ENCODE measurements at regions of chr17 and their contacts with region 1.

Region 1: GRCh38 chr17:9924735-9925191 is 19.7 kb upstream of the RCVRN start:
- DNase-seq: peak; percentile 39 to 56
- H3K4me3 ChIP-seq: no peak overlapping the region
- H3K27ac ChIP-seq: no peak overlapping the region
- H3K4me1 ChIP-seq: 0 out of 2 replicates have a peak, but pooled peaks cover 3% of the 10 kb centered on the region
- H3K27me3 ChIP-seq: peaks cover 2% of the 10 kb centered on the region; the same call in 1 of the 2 replicates
- CTCF ChIP-seq: peak; percentile 86

Region 2: DNA sequence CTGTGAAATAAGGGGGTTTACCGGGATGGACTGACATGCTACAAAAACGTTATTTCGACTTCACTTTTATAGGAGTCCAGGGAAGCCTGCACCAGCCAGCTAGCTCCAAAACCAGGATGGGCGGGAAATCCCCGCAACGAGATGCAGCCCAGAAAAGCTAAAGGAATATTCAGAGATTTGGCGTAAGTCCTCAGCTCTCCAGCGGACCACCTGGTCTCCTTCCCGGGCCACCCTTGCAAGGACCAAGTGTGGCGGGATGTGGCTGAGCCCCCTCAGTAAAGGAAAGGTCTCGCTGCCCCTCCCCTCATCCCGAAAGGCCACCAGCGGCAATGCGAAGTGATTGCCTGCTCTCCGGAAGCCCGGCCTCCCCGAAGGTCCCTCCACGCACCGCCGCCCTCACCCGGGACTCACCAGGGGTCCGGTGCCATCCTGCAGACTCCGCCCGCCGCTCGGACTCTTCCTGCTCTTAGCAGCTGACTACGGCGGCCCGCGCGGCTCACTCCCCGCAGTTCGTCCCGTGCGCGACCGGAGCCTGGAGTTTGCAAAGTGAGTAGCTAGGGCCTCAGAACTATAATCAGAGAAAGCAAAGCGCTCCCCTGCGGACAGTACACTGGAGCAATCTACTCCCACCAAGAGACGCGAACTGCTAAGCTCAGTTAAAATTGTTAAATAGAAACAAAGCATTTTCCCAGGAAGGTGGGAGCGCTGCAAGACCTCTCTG is 349.2 kb before region 1 on chr17 and contains the start of gene STX8:
- CTCF ChIA-PET with region 1: interaction called, 3 read pairs
- POLR2A ChIA-PET with region 1: no interaction called
- intact Hi-C with region 1: loop called (anchors 1 kb)
- DNase-seq: peak; percentile 57 to 88
- H3K4me3 ChIP-seq: peak within 1 kb of the TSS; percentile 82
- H3K27ac ChIP-seq: no peak within 1 kb of the TSS
- H3K4me1 ChIP-seq: no peaks in the 10 kb centered on the region
- H3K27me3 ChIP-seq: no peaks in the 10 kb centered on the region
- CTCF ChIP-seq: no peak
- total RNA-seq, gene STX8: 49.2 and 60.6 TPM in 2 replicates

Region 3: DNA sequence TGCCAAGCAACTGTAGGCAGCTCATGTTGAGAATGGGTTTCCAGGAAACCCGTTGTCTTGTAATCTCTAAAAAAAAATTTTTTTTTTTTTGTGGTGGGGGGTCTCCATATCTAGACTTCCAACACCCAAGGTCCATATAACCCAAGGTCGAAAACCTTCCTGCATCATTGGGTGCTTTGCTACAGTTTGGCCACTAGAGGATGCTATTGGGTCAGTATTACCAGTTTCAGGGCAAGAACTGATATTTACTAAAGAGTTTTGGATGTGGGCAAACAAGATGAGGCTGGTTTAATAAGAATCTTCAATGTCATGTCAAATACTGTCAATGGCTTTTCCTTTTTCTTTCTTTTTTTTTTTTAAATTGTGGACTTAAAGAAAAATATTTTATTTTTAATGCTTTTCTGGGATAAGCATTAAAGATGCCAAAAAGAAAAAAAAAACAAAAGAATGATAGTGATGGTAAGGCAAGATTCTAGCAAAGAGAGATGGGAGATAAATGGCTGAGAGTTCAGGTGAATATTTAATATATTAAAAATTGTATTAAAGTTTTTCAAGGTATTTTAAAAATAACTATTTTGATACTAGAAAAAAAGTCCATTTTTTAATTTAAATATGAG is 195.6 kb before region 1 on chr17:
- CTCF ChIA-PET with region 1: interaction called, 4 read pairs
- POLR2A ChIA-PET with region 1: no interaction called
- intact Hi-C with region 1: loop called (anchors 1 kb)
- DNase-seq: peak; percentile 29 to 47
- H3K4me3 ChIP-seq: no peak overlapping the region
- H3K27ac ChIP-seq: no peak overlapping the region
- H3K4me1 ChIP-seq: peaks cover 6% of the 10 kb centered on the region
- H3K27me3 ChIP-seq: no peaks in the 10 kb centered on the region
- CTCF ChIP-seq: peak; percentile 95

Region 4: GRCh38 chr17:9802305-9803096 is 122.3 kb before region 1 on chr17:
- CTCF ChIA-PET with region 1: no interaction called
- POLR2A ChIA-PET with region 1: interaction called, 3 read pairs
- intact Hi-C with region 1: loop called (anchors 1 kb)
- DNase-seq: peak; percentile 92 to 96
- H3K4me3 ChIP-seq: peak overlapping the region; percentile 46; the same call in 1 of the 2 replicates
- H3K27ac ChIP-seq: peak overlapping the region; percentile 97
- H3K4me1 ChIP-seq: peaks cover 24% of the 10 kb centered on the region
- H3K27me3 ChIP-seq: no peaks in the 10 kb centered on the region
- CTCF ChIP-seq: no peak

Region 5: DNA sequence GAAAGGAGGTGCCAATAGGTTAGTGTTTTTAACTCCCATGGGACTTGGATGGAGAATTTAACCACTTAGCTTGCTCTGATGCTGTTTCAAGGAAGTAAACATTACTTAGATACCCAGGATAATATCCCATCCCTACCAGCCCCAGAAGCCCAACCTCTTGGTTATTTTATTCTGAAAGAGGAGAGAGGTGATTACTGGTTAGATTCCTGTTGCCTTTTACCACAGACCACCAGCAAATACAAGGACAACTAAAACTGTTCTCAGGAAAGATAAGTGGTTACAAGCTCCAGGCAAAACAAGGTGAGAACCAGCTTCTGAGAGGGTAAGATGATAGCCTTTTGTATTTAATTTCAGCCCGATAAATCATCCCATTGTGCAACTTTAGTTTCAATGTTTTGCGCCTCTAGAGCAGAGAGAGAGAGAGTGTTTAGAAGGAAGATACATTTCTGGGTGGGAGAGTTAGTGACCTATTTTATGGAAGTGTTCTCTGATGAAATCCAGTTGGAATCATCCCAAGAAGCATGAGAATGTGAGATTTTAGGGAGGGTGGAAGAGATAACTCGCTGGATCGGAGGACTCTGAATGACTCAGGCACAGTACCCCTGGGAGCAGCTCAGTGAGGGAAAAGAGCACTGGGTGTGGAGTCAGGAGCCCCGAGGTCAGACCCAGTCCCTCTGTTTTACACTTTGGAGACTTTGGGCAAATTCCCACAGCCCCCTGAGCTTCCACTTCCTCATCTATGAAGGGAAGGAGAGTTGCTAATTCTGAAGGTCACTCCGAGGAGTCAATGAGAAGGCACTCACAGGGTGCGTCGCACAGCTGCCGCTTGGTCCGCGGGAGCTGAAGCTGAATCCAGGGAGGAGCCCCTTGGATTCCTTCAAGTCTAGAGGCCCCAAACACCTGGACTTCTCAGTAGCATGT is 87.0 kb before region 1 on chr17:
- CTCF ChIA-PET with region 1: interaction called, 3 read pairs
- POLR2A ChIA-PET with region 1: no interaction called
- intact Hi-C with region 1: loop called (anchors 1 kb)
- DNase-seq: peak; percentile 41 to 88
- H3K4me3 ChIP-seq: peak overlapping the region; percentile 37; the same call in 1 of the 2 replicates
- H3K27ac ChIP-seq: peak overlapping the region; percentile 99
- H3K4me1 ChIP-seq: peaks cover 51% of the 10 kb centered on the region
- H3K27me3 ChIP-seq: no peaks in the 10 kb centered on the region
- CTCF ChIP-seq: no peak

Region 6: DNA sequence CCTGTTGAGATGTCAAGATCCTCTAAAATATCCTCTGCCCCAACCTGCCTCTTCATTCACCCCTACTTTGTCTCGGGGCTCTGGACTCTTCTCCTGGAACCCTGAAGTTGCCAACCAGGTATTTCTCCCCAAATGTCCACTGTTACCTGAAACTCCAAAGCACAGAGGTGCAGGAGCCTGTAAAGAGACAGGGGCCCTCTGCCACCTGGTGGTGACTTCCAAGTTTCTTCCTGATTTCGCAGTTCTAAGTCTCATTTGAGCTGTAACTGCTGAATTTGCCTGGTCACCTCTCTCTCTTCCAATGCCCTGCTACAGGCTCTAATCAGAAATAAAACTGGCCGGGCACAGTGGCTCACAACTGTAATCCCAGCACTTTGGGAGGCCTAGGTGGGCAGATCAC is 57.4 kb after region 1 on chr17:
- CTCF ChIA-PET with region 1: no interaction called
- POLR2A ChIA-PET with region 1: no interaction called
- intact Hi-C with region 1: loop called (anchors 1 kb)
- DNase-seq: peak in 1 of 2 experiments; percentile 25
- H3K4me3 ChIP-seq: no peak overlapping the region
- H3K27ac ChIP-seq: no peak overlapping the region
- H3K4me1 ChIP-seq: no peaks in the 10 kb centered on the region
- H3K27me3 ChIP-seq: peaks cover 57% of the 10 kb centered on the region
- CTCF ChIP-seq: peak; percentile 54

Region 7: GRCh38 chr17:10119203-10120108 is 194.7 kb after region 1 on chr17:
- CTCF ChIA-PET with region 1: no interaction called
- POLR2A ChIA-PET with region 1: no interaction called
- intact Hi-C with region 1: no loop called
- DNase-seq: peak; percentile 81 to 83
- H3K4me3 ChIP-seq: no peak overlapping the region
- H3K27ac ChIP-seq: no peak overlapping the region
- H3K4me1 ChIP-seq: no peaks in the 10 kb centered on the region; the same call in 1 of the 2 replicates
- H3K27me3 ChIP-seq: peaks cover 10% of the 10 kb centered on the region; the same call in 1 of the 2 replicates
- CTCF ChIP-seq: no peak

Region 8: DNA sequence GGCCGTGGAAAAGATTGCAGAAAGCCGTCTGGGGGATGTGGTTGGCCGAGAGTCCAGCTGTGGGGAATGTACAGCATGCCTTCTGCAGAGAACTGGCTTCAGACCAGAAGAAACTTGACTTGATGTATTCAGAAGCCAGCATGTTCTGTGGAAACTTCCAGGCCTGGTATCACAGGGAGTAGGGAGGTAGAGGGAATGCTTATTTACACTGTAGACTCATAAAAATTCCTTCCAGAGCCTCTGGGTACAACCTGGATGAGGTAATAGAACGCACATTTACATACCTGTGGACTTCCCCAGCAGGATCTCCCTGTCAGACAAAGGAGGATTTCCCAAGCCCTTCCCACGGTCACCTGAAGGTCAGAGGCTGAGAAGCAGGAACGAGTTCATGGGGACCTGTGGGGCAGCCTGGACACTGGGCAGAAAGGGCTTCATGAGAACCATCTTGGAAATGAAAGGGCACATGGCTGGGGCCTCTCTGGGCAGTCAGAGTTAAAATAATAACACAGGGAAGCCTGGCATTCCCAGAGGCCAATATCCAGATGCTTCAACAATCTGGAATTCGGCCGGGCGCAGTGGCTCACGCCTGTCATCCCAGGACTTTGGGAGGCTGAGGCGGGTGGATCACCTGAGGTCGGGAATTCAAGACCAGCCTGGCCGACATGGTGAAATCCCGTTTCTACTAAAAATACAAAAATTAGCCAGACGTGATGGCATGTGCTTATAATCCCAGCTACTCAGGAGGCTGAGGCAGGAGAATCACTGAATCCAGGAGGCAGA is 285.6 kb after region 1 on chr17:
- CTCF ChIA-PET with region 1: no interaction called
- POLR2A ChIA-PET with region 1: no interaction called
- intact Hi-C with region 1: no loop called
- DNase-seq: peak in 1 of 2 experiments; percentile 39
- H3K4me3 ChIP-seq: no peak overlapping the region
- H3K27ac ChIP-seq: no peak overlapping the region
- H3K4me1 ChIP-seq: no peaks in the 10 kb centered on the region
- H3K27me3 ChIP-seq: peaks cover 39% of the 10 kb centered on the region
- CTCF ChIP-seq: no peak

Region 9: DNA sequence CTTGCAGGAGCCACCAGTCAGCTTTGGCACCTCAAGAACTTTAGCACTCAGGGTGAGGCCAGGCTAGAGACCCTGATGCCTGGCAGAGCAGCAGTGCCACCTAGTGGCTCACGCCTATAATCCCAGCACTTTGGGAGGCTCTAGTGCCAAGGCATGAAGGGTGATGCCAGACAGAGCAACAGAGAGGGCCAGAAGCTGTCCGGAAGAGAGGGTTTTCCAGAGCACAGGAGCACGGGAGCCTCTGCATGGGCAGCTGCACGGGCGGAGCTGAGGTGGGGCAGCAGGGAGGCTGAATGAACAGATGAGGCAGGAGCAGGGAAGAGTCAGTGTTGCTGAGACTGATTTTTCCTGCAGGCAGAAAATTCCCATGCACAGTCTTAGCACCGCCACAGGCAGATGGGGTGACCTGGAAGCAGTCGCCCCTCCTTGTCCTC is 693.5 kb after region 1 on chr17:
- CTCF ChIA-PET with region 1: interaction called, 5 read pairs
- POLR2A ChIA-PET with region 1: no interaction called
- intact Hi-C with region 1: loop called (anchors 2 kb)
- DNase-seq: peak; percentile 55 to 60
- H3K4me3 ChIP-seq: no peak overlapping the region
- H3K27ac ChIP-seq: no peak overlapping the region
- H3K4me1 ChIP-seq: no peaks in the 10 kb centered on the region
- H3K27me3 ChIP-seq: peaks cover 20% of the 10 kb centered on the region
- CTCF ChIP-seq: peak; percentile 78